GM12878 (cell line): ENCODE measurements at regions of chrX and their contacts with region 1.

Region 1: GRCh38 chrX:38327007-38327774 is at the start of gene RPGR:
- DNase-seq: peak; percentile 60
- ATAC-seq: peak; percentile 95
- H3K4me3 ChIP-seq: peak within 1 kb of the TSS; percentile 56
- H3K27ac ChIP-seq: peak within 1 kb of the TSS; percentile 62
- H3K4me1 ChIP-seq: no peaks in the 10 kb centered on the region; the same call in 1 of the 2 replicates
- H3K27me3 ChIP-seq: no peaks in the 10 kb centered on the region
- CTCF ChIP-seq: peak; percentile 67 to 91 (median 80); a peak in 5 of 6 replicates
- EP300 ChIP-seq: peak in 1 of 2 experiments; percentile 32; a peak in 1 of 4 replicates
- POLR2A ChIP-seq: peak; percentile 63
- RAD21 ChIP-seq: peak; percentile 66
- polyA plus RNA-seq, gene RPGR: 7.6 to 8.1 TPM

Region 2: DNA sequence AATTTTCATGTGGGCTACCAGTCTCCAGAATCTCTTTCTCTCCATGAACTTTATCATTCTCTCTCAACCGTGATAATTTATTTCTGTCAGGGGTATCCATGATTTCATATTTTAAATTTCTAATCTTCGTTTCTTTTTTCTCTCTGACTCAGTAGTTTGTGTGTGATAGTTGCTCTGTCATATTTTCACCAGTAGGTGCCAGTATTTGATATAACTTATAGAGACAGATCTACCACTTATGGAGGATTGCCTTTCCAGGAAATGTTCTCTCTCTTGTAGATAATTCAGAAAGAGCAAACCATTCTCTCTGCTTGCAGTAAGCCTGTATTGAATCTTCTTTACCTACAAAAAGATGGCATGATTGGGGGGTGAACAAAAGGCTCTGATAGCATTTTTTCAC is 400.5 kb before region 1 on chrX:
- CTCF ChIA-PET with region 1: interaction called, 5 read pairs
- POLR2A ChIA-PET with region 1: no interaction called
- RAD21 ChIA-PET with region 1: interaction called, 5 read pairs
- SMC1A ChIA-PET with region 1: interaction called, 3 read pairs
- in situ Hi-C with region 1: no loop called
- intact Hi-C with region 1: loop called (anchors 5 kb)
- DNase-seq: peak; percentile 4
- ATAC-seq: peak; percentile 84
- H3K4me3 ChIP-seq: no peak overlapping the region
- H3K27ac ChIP-seq: no peak overlapping the region
- H3K4me1 ChIP-seq: no peaks in the 10 kb centered on the region
- H3K27me3 ChIP-seq: no peaks in the 10 kb centered on the region
- CTCF ChIP-seq: peak in 2 of 3 experiments; percentile 46 to 50; a peak in 3 of 6 replicates
- EP300 ChIP-seq: no peak
- POLR2A ChIP-seq: no peak
- RAD21 ChIP-seq: peak; percentile 60

Region 3: DNA sequence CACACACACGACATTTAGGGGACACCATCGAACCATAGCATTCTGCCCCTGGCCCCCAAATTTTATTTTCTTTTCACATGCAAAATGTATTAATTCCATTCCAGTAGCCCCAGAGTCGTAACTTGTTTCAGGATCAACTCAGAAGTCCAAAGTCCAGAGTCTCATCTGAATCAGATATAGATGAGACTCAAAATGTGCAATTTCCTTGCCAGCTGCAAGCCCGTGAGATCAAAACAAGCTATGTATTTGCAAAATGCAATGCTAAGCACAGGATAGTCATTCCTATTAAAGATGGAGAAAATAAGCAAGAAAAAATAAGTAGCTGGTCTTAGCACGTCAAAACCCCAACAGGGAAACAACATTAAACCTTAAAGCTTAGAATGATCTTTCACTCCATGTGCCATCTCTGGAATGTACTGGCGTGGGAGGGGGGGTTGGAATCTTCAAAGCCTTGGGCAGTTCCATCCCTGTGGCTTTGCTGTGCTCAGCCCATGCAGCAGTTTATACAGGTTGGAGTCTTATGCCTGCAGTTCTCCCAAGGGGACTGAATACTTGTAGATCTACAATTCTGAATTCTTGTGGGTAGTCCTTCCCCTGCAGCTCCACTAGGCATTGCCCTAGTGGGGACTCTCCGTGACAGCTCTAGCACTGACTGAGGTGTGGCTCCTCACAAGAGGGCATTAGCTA is 368.5 kb before region 1 on chrX:
- CTCF ChIA-PET with region 1: no interaction called
- POLR2A ChIA-PET with region 1: no interaction called
- RAD21 ChIA-PET with region 1: no interaction called
- SMC1A ChIA-PET with region 1: no interaction called
- in situ Hi-C with region 1: no loop called
- intact Hi-C with region 1: no loop called
- DNase-seq: no peak
- ATAC-seq: no peak
- H3K4me3 ChIP-seq: no peak overlapping the region
- H3K27ac ChIP-seq: no peak overlapping the region
- H3K4me1 ChIP-seq: no peaks in the 10 kb centered on the region
- H3K27me3 ChIP-seq: no peaks in the 10 kb centered on the region
- CTCF ChIP-seq: no peak
- EP300 ChIP-seq: no peak
- POLR2A ChIP-seq: no peak
- RAD21 ChIP-seq: no peak

Region 4: DNA sequence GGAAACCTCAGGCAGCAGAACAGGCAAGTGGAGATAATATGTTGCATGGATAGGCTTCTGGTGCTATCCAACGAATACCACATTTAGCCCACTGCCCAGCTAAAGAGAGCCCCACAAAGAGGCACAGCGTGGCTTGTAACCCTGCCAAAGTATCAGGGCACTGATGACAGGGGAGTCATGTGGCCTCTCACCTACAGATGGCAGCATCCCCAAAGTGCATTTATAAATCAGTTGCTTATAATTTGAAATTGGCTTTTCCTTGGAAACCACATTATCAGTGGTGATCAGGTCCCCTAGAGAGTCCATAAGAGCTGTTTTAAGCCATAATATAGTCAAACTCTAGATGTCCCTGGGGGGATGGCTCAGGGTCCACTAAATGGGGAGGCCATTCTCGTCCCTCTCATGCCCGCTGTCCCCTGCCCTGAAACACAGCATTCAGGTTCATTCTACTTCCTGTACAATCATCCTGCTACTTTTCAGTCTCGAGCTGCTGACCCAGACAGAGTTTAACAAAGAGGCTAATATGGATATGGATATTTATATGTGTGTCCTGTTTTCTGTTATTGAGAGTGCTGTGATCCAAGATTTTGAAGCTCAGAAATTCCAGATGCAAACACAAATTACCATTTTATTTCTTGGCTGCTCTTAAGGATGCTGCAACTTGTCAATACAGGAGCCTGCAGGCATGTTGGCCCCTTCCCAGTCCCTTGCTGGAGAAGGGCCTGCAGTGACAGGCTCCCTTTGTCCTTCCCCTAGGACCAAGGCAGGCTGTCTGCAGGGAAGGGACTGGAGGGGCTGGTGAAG is 135.0 kb before region 1 on chrX:
- CTCF ChIA-PET with region 1: interaction called, 17 read pairs
- POLR2A ChIA-PET with region 1: no interaction called
- RAD21 ChIA-PET with region 1: interaction called, 9 read pairs
- SMC1A ChIA-PET with region 1: interaction called, 17 read pairs
- in situ Hi-C with region 1: no loop called
- intact Hi-C with region 1: loop called (anchors 1 kb)
- DNase-seq: no peak
- ATAC-seq: peak; percentile 87
- H3K4me3 ChIP-seq: no peak overlapping the region
- H3K27ac ChIP-seq: no peak overlapping the region
- H3K4me1 ChIP-seq: 0 out of 2 replicates have a peak, but pooled peaks cover 2% of the 10 kb centered on the region
- H3K27me3 ChIP-seq: no peaks in the 10 kb centered on the region; a peak in 1 of 4 replicates
- CTCF ChIP-seq: peak; percentile 45 to 54 (median 51)
- EP300 ChIP-seq: no peak
- POLR2A ChIP-seq: no peak
- RAD21 ChIP-seq: peak; percentile 68

Region 5: GRCh38 chrX:38260231-38260630 is 67.0 kb before region 1 on chrX:
- CTCF ChIA-PET with region 1: interaction called, 43 read pairs
- POLR2A ChIA-PET with region 1: interaction called, 4 read pairs
- RAD21 ChIA-PET with region 1: interaction called, 32 read pairs
- SMC1A ChIA-PET with region 1: interaction called, 33 read pairs
- in situ Hi-C with region 1: loop called (anchors 5 kb)
- intact Hi-C with region 1: loop called (anchors 1 kb)
- DNase-seq: no peak
- ATAC-seq: peak; percentile 89
- H3K4me3 ChIP-seq: no peak overlapping the region
- H3K27ac ChIP-seq: no peak overlapping the region
- H3K4me1 ChIP-seq: no peaks in the 10 kb centered on the region
- H3K27me3 ChIP-seq: no peaks in the 10 kb centered on the region
- CTCF ChIP-seq: peak; percentile 50 to 68 (median 51)
- EP300 ChIP-seq: no peak
- POLR2A ChIP-seq: no peak
- RAD21 ChIP-seq: peak; percentile 65

Region 6: DNA sequence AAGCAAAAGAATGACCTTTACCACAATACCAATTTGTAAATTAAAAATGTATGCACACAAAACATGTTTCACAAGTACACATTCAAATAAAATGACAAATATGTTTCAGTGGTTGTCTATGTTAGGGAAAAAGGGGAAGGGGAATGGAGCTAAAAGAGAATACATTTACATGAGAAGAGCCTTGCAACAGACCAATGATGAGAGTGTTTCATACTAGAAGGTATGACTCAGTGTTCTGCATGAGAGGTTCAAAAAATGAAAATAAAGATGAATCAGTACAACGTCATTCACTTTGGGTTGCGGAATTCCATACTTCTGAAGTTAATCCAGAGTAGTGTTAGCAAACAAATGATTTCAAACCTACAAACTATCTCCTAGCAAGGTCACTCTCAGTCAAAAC is 51.6 kb before region 1 on chrX:
- CTCF ChIA-PET with region 1: interaction called, 11 read pairs
- POLR2A ChIA-PET with region 1: interaction called, 7 read pairs
- RAD21 ChIA-PET with region 1: interaction called, 14 read pairs
- SMC1A ChIA-PET with region 1: interaction called, 16 read pairs
- in situ Hi-C with region 1: no loop called
- intact Hi-C with region 1: loop called (anchors 2 kb)
- DNase-seq: peak; percentile 13
- ATAC-seq: peak; percentile 46
- H3K4me3 ChIP-seq: no peak overlapping the region
- H3K27ac ChIP-seq: no peak overlapping the region
- H3K4me1 ChIP-seq: peaks cover 2% of the 10 kb centered on the region
- H3K27me3 ChIP-seq: no peaks in the 10 kb centered on the region
- CTCF ChIP-seq: no peak
- EP300 ChIP-seq: no peak
- POLR2A ChIP-seq: no peak
- RAD21 ChIP-seq: no peak

Region 7: DNA sequence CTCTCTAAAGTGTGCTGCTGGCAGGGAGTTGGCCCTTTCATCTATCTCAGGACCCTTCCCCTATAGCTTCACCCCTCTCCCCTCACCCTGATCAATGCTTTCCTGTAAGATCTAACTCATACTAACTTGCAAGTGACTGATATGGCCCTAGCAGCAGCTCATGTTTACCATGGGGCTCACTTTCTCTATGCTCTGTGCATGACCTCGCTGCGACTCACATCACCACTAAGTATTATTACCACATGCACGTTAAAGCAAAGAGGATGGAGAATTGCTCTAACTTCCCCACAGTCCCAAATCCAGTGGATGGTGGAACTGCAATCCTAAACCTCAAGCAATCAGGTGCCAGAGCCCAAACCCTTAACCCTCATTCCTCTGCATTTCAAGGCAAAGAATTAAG is 1100.7 kb after region 1 on chrX:
- CTCF ChIA-PET with region 1: no interaction called
- POLR2A ChIA-PET with region 1: no interaction called
- RAD21 ChIA-PET with region 1: no interaction called
- SMC1A ChIA-PET with region 1: no interaction called
- in situ Hi-C with region 1: no loop called
- intact Hi-C with region 1: no loop called
- DNase-seq: no peak
- ATAC-seq: no peak
- H3K4me3 ChIP-seq: no peak overlapping the region
- H3K27ac ChIP-seq: no peak overlapping the region
- H3K4me1 ChIP-seq: no peaks in the 10 kb centered on the region
- H3K27me3 ChIP-seq: no peaks in the 10 kb centered on the region
- CTCF ChIP-seq: no peak
- EP300 ChIP-seq: no peak
- POLR2A ChIP-seq: no peak
- RAD21 ChIP-seq: no peak